ENCODE measurements at regions of chr7 and their contacts with region 1.

Region 1: GRCh38 chr7:135160098-135160857 is 10.2 kb downstream of the CYREN start:
- DNase-seq: no peak
- H3K4me3 ChIP-seq: no peak overlapping the region
- H3K27ac ChIP-seq: no peak overlapping the region
- H3K4me1 ChIP-seq: 0 out of 7 replicates have a peak, but pooled peaks cover 0 to 2% (median 0%) of the 10 kb centered on the region in 4 experiments
- H3K27me3 ChIP-seq: no peaks in the 10 kb centered on the region
- CTCF ChIP-seq: no peak
- EP300 ChIP-seq: no peak
- POLR2A ChIP-seq: no peak
- RAD21 ChIP-seq: no peak

Region 2: GRCh38 chr7:135170274-135170997 is 10.2 kb after region 1 on chr7 and contains the start of gene CYREN:
- CTCF ChIA-PET with region 1: interaction called, 12 read pairs
- POLR2A ChIA-PET with region 1: interaction called, 32 read pairs
- DNase-seq: peak; percentile 78 to 87
- H3K4me3 ChIP-seq: peak within 1 kb of the TSS; percentile 60 to 81 (median 72)
- H3K27ac ChIP-seq: peak within 1 kb of the TSS; percentile 89
- H3K4me1 ChIP-seq: peaks cover 1 to 16% (median 3%) of the 10 kb centered on the region in 4 experiments; a peak in 4 of 7 replicates
- H3K27me3 ChIP-seq: no peaks in the 10 kb centered on the region
- CTCF ChIP-seq: peak in 2 of 3 experiments; percentile 13 to 43; a peak in 3 of 4 replicates
- EP300 ChIP-seq: peak in 1 of 2 experiments; percentile 56; a peak in 1 of 3 replicates
- POLR2A ChIP-seq: peak; percentile 50 to 84
- RAD21 ChIP-seq: peak; percentile 26 to 53; a peak in 3 of 4 replicates
- total RNA-seq, gene CYREN: 46.0 and 46.2 TPM in 2 replicates

Region 3: GRCh38 chr7:135177021-135177696 is 16.9 kb after region 1 on chr7:
- CTCF ChIA-PET with region 1: interaction called, 5 read pairs
- POLR2A ChIA-PET with region 1: interaction called, 20 read pairs
- DNase-seq: peak in 1 of 2 experiments; percentile 39
- H3K4me3 ChIP-seq: no peak overlapping the region
- H3K27ac ChIP-seq: no peak overlapping the region
- H3K4me1 ChIP-seq: peaks cover 0 to 3% (median 2%) of the 10 kb centered on the region in 4 experiments; a peak in 3 of 7 replicates
- H3K27me3 ChIP-seq: no peaks in the 10 kb centered on the region
- CTCF ChIP-seq: no peak
- EP300 ChIP-seq: no peak
- POLR2A ChIP-seq: no peak
- RAD21 ChIP-seq: no peak